PC-3 (cell line): ENCODE measurements at regions of chr1 and their contacts with region 1.

Region 1: DNA sequence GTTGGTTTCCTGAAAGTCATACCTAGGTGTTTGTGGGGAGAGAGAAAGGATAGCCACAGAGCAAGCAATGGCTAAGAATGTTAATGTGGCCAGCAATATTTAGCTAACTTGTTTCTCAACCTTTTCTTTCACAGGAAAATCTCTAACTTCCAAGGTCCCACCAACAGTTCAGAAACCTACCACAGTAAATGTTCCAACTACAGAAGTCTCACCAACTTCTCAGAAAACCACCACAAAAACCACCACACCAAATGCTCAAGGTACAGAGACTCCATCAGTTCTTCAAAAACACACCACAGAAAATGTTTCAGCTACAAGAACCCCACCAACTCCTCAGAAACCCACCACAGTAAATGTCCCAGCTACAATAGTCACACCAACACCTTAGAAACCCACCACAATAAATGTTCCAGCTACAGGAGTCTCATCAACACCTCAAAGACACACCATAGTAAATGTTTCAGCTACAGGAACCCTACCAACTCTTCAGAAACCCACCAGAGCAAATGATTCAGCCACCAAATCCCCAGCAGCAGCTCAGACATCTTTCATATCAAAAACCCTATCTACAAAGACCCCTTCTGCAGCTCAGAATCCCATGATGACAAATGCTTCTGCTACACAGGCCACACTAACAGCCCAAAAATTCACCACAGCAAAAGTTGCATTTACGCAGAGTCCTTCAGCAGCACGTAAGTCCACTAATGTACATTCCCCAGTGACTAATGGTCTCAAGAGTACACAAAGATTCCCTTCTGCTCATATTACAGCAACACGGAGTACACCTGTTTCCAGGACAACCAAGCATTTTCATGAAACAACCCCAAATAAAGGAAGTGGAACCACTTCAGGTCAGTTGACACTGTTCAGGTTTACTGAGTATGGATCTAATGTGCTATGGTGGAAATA is 15.3 kb downstream of the CD55 start:
- DNase-seq: peak; percentile 97
- ATAC-seq: peak; percentile 98
- H3K4me3 ChIP-seq: no peak overlapping the region
- H3K27ac ChIP-seq: peak overlapping the region; percentile 74
- H3K4me1 ChIP-seq: peaks cover 21% of the 10 kb centered on the region
- H3K27me3 ChIP-seq: no peaks in the 10 kb centered on the region
- CTCF ChIP-seq: no peak

Region 2: GRCh38 chr1:207291723-207292122 is 45.1 kb before region 1 on chr1:
- CTCF ChIA-PET with region 1: no interaction called
- POLR2A ChIA-PET with region 1: no interaction called
- intact Hi-C with region 1: no loop called
- DNase-seq: no peak
- ATAC-seq: no peak
- H3K4me3 ChIP-seq: no peak overlapping the region
- H3K27ac ChIP-seq: no peak overlapping the region
- H3K4me1 ChIP-seq: no peaks in the 10 kb centered on the region
- H3K27me3 ChIP-seq: no peaks in the 10 kb centered on the region
- CTCF ChIP-seq: no peak

Region 3: DNA sequence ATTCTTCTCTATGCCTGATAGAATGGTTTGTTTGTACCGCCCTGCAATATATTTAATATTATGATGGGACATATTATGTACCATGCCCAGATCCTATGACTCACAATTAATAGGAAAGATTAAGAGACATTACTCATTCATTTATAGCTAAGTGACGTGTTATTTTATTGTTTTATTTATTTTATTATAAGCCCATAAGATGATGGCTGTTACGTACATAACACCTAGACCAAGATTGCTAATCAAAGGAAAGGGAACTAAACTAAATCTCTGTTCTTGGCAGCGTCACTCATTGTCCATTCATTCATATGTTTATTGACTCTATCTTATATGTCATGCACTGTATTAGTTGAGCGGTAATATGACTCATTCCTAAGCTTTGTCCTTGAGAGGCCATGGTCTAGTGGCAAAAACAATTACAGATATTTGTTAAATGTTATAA is 32.1 kb before region 1 on chr1:
- CTCF ChIA-PET with region 1: no interaction called
- POLR2A ChIA-PET with region 1: no interaction called
- intact Hi-C with region 1: loop called (anchors 2 kb)
- DNase-seq: peak; percentile 99
- ATAC-seq: peak; percentile 88
- H3K4me3 ChIP-seq: no peak overlapping the region
- H3K27ac ChIP-seq: peak overlapping the region; percentile 89
- H3K4me1 ChIP-seq: peaks cover 38% of the 10 kb centered on the region
- H3K27me3 ChIP-seq: no peaks in the 10 kb centered on the region
- CTCF ChIP-seq: no peak

Region 4: GRCh38 chr1:207352554-207352953 is 15.7 kb after region 1 on chr1:
- CTCF ChIA-PET with region 1: interaction called, 5 read pairs
- POLR2A ChIA-PET with region 1: interaction called, 6 read pairs
- intact Hi-C with region 1: loop called (anchors 1 kb)
- DNase-seq: no peak
- ATAC-seq: peak; percentile 67
- H3K4me3 ChIP-seq: no peak overlapping the region
- H3K27ac ChIP-seq: no peak overlapping the region
- H3K4me1 ChIP-seq: peaks cover 6% of the 10 kb centered on the region
- H3K27me3 ChIP-seq: no peaks in the 10 kb centered on the region
- CTCF ChIP-seq: no peak